Natural killer cell (primary cell): ENCODE measurements at regions of chr18 and their contacts with region 1.

Region 1: GRCh38 chr18:54558609-54559585 is 32.1 kb upstream of the DYNAP start:
- DNase-seq: peak in 1 of 2 donors; percentile 47
- ATAC-seq: no peak
- H3K4me3 ChIP-seq: no peak overlapping the region
- H3K4me3 Mint-ChIP-seq: no peak overlapping the region
- H3K27ac ChIP-seq: no peak overlapping the region
- H3K27ac Mint-ChIP-seq: no peak overlapping the region
- H3K4me1 ChIP-seq: no peaks in the 10 kb centered on the region
- H3K4me1 Mint-ChIP-seq: no peaks in the 10 kb centered on the region
- H3K27me3 ChIP-seq: no peaks in the 10 kb centered on the region
- H3K27me3 Mint-ChIP-seq: peaks cover 0 to 3% of the 10 kb centered on the region in 2 donors
- CTCF ChIP-seq: peak; percentile 60

Region 2: DNA sequence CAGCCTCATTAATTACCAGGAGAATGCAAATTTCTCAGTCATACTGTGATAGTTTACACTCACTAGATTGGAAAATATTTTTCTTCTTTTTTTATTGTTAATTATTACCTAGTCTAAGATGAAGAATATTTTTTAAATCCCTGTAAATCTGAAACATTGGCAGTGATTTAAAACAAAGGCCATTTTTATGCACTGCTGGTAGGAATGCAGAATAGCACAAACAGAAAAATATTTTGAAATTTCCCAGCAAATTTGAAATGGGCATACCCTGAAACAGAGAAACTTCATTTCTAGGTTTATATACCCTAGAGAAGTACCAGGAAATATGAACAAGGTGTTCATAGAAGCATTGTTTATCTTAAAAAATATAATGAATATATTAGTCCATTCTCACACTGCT is 63.2 kb after region 1 on chr18:
- intact Hi-C with region 1: loop called (anchors 10 kb)
- DNase-seq: no peak
- ATAC-seq: no peak
- H3K4me3 ChIP-seq: no peak overlapping the region
- H3K4me3 Mint-ChIP-seq: no peak overlapping the region
- H3K27ac ChIP-seq: no peak overlapping the region
- H3K27ac Mint-ChIP-seq: no peak overlapping the region
- H3K4me1 ChIP-seq: no peaks in the 10 kb centered on the region
- H3K4me1 Mint-ChIP-seq: no peaks in the 10 kb centered on the region
- H3K27me3 ChIP-seq: no peaks in the 10 kb centered on the region
- H3K27me3 Mint-ChIP-seq: peaks cover 6% of the 10 kb centered on the region in 2 donors
- CTCF ChIP-seq: no peak

Region 3: DNA sequence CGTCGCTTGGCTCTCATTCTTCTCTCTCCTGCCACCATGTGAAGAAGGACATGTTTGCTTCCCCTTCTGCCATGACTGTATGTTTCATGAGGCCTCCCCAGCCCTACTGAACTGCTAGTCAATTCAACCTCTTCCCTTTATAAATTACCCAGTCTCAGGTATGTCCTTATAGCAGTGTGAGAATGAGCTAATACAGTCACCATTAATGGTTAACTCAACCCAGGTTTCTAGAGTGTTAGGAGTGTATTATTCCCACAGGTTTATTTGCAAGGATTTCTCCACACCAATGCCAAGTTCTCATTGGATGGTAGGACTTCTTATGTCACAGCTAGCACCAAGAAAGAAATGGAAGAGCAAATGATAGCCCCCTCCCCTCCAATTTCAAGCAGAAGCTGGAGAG is 104.1 kb after region 1 on chr18:
- intact Hi-C with region 1: no loop called
- DNase-seq: no peak
- ATAC-seq: no peak
- H3K4me3 ChIP-seq: no peak overlapping the region
- H3K4me3 Mint-ChIP-seq: no peak overlapping the region
- H3K27ac ChIP-seq: no peak overlapping the region
- H3K27ac Mint-ChIP-seq: no peak overlapping the region
- H3K4me1 ChIP-seq: no peaks in the 10 kb centered on the region
- H3K4me1 Mint-ChIP-seq: no peaks in the 10 kb centered on the region
- H3K27me3 ChIP-seq: no peaks in the 10 kb centered on the region
- H3K27me3 Mint-ChIP-seq: peaks cover 6 to 23% of the 10 kb centered on the region in 2 donors
- CTCF ChIP-seq: no peak